CD14-positive monocyte (primary cell): ENCODE measurements at regions of chr17 and their contacts with region 1.

Region 1: GRCh38 chr17:78421484-78422266 is 43.2 kb downstream of the PGS1 start:
- DNase-seq: peak; percentile 77 to 80 (median 78)
- H3K4me3 ChIP-seq: no peak overlapping the region
- H3K4me3 Mint-ChIP-seq: no peak overlapping the region
- H3K27ac ChIP-seq: peak overlapping the region in 1 of 2 donors; percentile 13
- H3K27ac Mint-ChIP-seq: peak overlapping the region; percentile 57 to 99 (median 76)
- H3K4me1 ChIP-seq: peaks cover 16 to 26% of the 10 kb centered on the region in 2 donors
- H3K4me1 Mint-ChIP-seq: peaks cover 30% of the 10 kb centered on the region
- H3K27me3 ChIP-seq: no peaks in the 10 kb centered on the region
- H3K27me3 Mint-ChIP-seq: peaks cover 0 to 2% (median 0%) of the 10 kb centered on the region in 3 donors
- CTCF ChIP-seq: peak; percentile 97

Region 2: GRCh38 chr17:78112518-78113226 is 309.0 kb before region 1 on chr17:
- intact Hi-C with region 1: loop called (anchors 10 kb)
- DNase-seq: peak; percentile 64 to 71 (median 71)
- H3K4me3 ChIP-seq: no peak overlapping the region
- H3K4me3 Mint-ChIP-seq: peak overlapping the region in 1 of 2 donors; percentile 30
- H3K27ac ChIP-seq: no peak overlapping the region
- H3K27ac Mint-ChIP-seq: peak overlapping the region in 5 of 7 donors; percentile 47 to 90 (median 70)
- H3K4me1 ChIP-seq: peaks cover 16 to 27% of the 10 kb centered on the region in 2 donors
- H3K4me1 Mint-ChIP-seq: peaks cover 28% of the 10 kb centered on the region
- H3K27me3 ChIP-seq: no peaks in the 10 kb centered on the region
- H3K27me3 Mint-ChIP-seq: peaks cover 0 to 5% (median 0%) of the 10 kb centered on the region in 3 donors
- CTCF ChIP-seq: peak; percentile 98

Region 3: DNA sequence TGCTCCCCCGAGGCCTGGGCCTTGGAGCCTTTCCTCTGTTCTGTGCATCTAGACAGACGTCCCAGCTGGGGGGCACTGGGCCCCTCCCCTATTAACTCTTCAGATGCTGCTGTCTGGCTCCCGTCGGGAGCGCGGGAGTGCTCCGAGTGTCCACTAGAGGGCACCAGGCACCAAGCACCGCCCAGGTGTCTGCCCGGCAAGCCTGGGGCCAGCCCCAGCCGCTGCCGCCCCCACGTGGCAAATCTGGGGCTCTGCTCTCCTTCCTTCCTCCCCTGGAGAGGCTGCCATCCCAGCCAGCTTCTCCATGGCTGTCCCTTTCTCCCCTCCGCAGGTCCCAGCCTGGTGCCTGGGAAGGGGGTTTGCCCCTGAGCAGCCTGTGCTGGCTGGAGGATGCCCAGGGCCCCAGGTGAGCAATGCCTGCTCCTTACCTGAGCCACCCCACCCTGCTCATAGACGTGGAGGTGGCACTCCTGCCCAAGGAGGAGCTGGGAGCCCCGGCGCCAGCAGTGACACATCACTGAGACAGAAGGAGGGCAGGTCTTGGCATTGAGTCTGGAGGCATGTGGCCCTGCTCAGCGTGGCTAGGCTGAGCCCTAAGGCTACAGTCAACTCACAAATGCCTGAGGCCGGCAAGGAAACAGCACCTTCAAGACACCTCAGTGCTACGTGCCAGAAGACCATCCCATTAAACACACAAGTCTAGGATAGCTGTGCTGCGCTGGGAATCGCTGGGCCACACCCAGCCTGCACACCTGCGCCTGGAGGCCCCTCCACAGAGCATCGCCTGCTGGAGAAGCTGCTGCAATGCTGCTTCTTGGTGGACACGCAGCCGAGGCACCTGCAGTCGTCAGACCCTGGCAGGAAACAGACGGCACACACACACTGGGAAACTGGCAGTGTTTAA is 170.5 kb before region 1 on chr17:
- intact Hi-C with region 1: loop called (anchors 2 to 5 kb)
- DNase-seq: peak; percentile 83 to 88 (median 87)
- H3K4me3 ChIP-seq: no peak overlapping the region
- H3K4me3 Mint-ChIP-seq: peak overlapping the region in 1 of 2 donors; percentile 39
- H3K27ac ChIP-seq: no peak overlapping the region
- H3K27ac Mint-ChIP-seq: peak overlapping the region in 3 of 7 donors; percentile 30 to 80 (median 57)
- H3K4me1 ChIP-seq: peaks cover 20 to 31% of the 10 kb centered on the region in 2 donors
- H3K4me1 Mint-ChIP-seq: peaks cover 21% of the 10 kb centered on the region
- H3K27me3 ChIP-seq: peaks cover 0 to 10% of the 10 kb centered on the region in 2 donors
- H3K27me3 Mint-ChIP-seq: peaks cover 7 to 10% (median 8%) of the 10 kb centered on the region in 3 donors
- CTCF ChIP-seq: peak; percentile 100

Region 4: DNA sequence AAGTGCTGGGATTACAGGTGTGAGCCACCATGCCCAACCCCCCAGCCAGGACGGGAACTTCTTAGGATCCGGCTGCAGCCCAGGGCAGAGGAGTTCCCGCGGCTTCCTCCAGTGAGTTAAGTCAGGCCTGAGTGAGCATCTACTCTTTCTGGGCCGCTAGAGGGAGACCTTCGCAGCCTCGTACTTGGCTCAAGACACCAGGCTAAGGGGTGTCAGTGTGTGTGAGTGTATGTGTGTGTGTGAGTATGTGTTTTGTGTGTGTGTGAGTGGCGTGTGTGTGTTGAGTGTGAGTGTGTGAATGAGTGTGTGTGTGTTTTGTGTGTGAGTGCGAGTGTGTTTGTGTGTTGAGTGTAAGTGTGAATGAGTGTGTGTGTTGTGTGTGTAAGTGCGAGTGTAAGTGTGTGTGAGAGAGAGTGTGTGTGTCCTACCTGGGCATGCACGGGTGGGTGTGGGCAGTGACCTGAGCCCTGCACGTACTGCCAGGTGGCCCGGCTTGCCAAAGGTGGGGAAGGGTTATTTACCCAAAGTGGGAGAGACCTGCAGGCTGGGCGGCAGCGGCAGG is 131.8 kb before region 1 on chr17:
- intact Hi-C with region 1: loop called in 1 of 2 experiments (anchors 5 kb)
- DNase-seq: peak; percentile 77 to 89 (median 80)
- H3K4me3 ChIP-seq: no peak overlapping the region
- H3K4me3 Mint-ChIP-seq: no peak overlapping the region
- H3K27ac ChIP-seq: no peak overlapping the region
- H3K27ac Mint-ChIP-seq: no peak overlapping the region
- H3K4me1 ChIP-seq: peaks cover 48 to 62% of the 10 kb centered on the region in 2 donors
- H3K4me1 Mint-ChIP-seq: peaks cover 31% of the 10 kb centered on the region
- H3K27me3 ChIP-seq: no peaks in the 10 kb centered on the region
- H3K27me3 Mint-ChIP-seq: peaks cover 0 to 2% (median 0%) of the 10 kb centered on the region in 3 donors
- CTCF ChIP-seq: peak; percentile 74

Region 5: GRCh38 chr17:78387977-78388941 is 33.4 kb before region 1 on chr17:
- intact Hi-C with region 1: loop called in 1 of 2 experiments (anchors 2 kb)
- DNase-seq: peak; percentile 93 to 96 (median 93)
- H3K4me3 ChIP-seq: peak overlapping the region in 1 of 3 experiments; percentile 57
- H3K4me3 Mint-ChIP-seq: peak overlapping the region; percentile 27 to 74
- H3K27ac ChIP-seq: peak overlapping the region; percentile 97 to 99
- H3K27ac Mint-ChIP-seq: peak overlapping the region; percentile 97 to 100 (median 98)
- H3K4me1 ChIP-seq: peaks cover 73 to 75% of the 10 kb centered on the region in 2 donors
- H3K4me1 Mint-ChIP-seq: peaks cover 72% of the 10 kb centered on the region
- H3K27me3 ChIP-seq: no peaks in the 10 kb centered on the region
- H3K27me3 Mint-ChIP-seq: peaks cover 0 to 2% (median 1%) of the 10 kb centered on the region in 3 donors
- CTCF ChIP-seq: no peak